HepG2 (cell line): ENCODE measurements at regions of chr15 and their contacts with region 1.

Region 1: DNA sequence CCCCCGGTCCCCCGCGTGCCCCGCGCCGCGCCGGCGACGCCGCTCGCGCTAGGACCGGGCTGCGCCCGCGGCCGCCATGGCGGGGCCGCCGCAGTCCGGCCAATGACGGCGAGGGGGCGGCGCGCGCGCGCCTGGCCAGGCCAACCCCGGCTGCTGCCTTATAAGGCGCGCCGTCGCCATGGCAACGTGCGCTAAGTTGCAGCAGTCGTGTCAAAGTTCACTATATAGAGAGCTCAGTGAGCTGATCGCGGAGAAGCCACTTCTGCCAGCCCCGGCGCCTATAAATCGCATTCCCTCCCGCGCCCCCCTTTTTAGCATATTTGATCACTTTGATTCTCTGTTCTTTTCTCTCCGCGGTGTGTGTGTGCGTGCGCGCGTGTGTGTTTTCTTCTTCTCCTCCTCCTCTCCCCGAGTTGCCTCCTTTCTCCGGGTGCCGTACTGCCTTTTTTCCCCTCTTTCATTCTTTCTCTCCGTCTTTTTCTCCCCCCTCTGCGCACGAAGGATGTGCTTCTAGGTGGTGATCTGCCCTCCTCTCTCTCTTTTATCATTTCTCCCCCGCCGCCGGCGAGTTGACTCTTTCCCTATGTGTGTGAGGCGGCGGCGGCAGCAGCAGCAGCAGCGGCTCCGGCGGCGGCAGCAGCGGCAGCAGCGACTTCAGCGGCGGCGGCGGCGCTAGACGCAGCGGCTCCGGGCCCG is at the start of gene NR2F2:
- DNase-seq: peak; percentile 95
- ATAC-seq: peak; percentile 60
- H3K4me3 ChIP-seq: peak within 1 kb of the TSS; percentile 70 to 94 (median 94)
- H3K27ac ChIP-seq: peak within 1 kb of the TSS; percentile 99
- H3K4me1 ChIP-seq: peaks cover 42% of the 10 kb centered on the region
- H3K27me3 ChIP-seq: no peaks in the 10 kb centered on the region; a peak in 1 of 5 replicates
- CTCF ChIP-seq: no peak
- EP300 ChIP-seq: peak in 1 of 2 experiments; percentile 17; a peak in 1 of 4 replicates
- POLR2A ChIP-seq: peak; percentile 79 to 83
- RAD21 ChIP-seq: 0 out of 2 replicates have a peak, but pooled peaks have one; percentile 20
- total RNA-seq, gene NR2F2: 3.5 and 5.0 TPM in 2 replicates

Region 2: GRCh38 chr15:94844538-94845389 is 1485.8 kb before region 1 on chr15:
- CTCF ChIA-PET with region 1: no interaction called
- POLR2A ChIA-PET with region 1: interaction called, 7 read pairs
- in situ Hi-C with region 1: no loop called
- intact Hi-C with region 1: loop called (anchors 5 kb)
- DNase-seq: peak; percentile 96
- ATAC-seq: peak; percentile 86
- H3K4me3 ChIP-seq: peak overlapping the region; percentile 43 to 63 (median 61)
- H3K27ac ChIP-seq: peak overlapping the region; percentile 97
- H3K4me1 ChIP-seq: peaks cover 52% of the 10 kb centered on the region
- H3K27me3 ChIP-seq: no peaks in the 10 kb centered on the region; a peak in 1 of 5 replicates
- CTCF ChIP-seq: peak; percentile 26; the same call in 1 of the 2 replicates
- EP300 ChIP-seq: peak; percentile 21 to 83; a peak in 3 of 4 replicates
- POLR2A ChIP-seq: peak in 1 of 2 experiments; percentile 32; a peak in 2 of 4 replicates
- RAD21 ChIP-seq: 0 out of 2 replicates have a peak, but pooled peaks have one; percentile 28

Region 3: DNA sequence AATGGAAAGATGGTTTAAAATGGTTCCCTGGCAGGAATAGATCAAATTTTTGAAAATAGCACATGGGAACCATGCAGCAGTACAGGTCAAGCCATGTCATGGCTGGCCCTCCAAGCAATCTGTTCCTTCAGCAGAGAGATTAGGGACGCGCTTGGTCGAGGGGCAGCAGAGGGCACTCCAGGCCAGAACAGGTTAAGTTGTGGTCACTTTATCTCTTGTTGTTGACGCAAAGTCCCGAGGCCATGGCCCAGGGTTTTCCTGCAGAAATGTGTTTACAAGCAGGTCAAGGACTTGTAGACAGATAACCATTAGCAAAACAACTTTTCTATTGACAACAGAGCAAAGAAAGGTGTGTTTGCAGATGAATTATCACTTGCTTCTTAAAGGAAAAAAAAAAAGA is 570.1 kb before region 1 on chr15:
- CTCF ChIA-PET with region 1: no interaction called
- POLR2A ChIA-PET with region 1: no interaction called
- in situ Hi-C with region 1: loop called (anchors 25 kb)
- intact Hi-C with region 1: loop called (anchors 5 kb)
- DNase-seq: peak; percentile 30
- ATAC-seq: peak; percentile 94
- H3K4me3 ChIP-seq: no peak overlapping the region
- H3K27ac ChIP-seq: no peak overlapping the region
- H3K4me1 ChIP-seq: no peaks in the 10 kb centered on the region
- H3K27me3 ChIP-seq: no peaks in the 10 kb centered on the region
- CTCF ChIP-seq: peak; percentile 76
- EP300 ChIP-seq: peak in 1 of 2 experiments; percentile 23; a peak in 1 of 4 replicates
- POLR2A ChIP-seq: no peak
- RAD21 ChIP-seq: peak; percentile 35; the same call in 1 of the 2 replicates

Region 4: DNA sequence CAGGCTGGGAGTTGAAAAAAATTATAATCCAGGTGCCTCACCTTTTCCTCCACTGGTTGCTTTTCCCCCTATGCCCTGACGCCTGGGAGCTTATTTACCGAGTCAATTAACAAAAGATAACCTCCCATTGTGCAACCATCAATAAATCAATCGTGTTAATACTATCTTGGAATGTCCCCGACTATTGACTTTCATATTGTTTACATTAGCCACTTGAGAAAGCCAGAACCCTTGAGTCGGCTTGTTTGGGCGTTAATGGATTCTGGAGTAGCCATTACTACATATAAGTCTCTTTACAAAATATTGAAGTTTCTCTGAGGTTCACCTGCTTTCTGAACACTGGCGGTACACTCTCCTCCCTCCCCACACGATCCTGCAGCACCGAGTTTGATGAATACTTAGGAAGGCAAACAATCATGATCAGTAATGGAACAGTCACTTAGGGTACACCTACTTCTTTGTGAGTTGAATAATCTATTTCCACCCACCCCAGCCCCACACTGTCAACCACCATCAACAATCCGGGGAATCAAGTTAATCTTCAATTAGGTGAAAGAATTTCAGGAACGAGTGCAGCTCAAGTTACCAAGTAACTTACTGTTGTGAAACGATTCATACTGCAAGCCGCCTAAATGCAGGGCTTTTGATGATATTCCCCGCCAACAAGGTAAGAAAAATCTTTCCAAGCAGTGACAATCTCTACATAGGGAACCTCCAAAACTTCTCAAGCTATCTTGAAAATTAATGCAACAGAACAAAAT is 159.4 kb before region 1 on chr15:
- CTCF ChIA-PET with region 1: no interaction called
- POLR2A ChIA-PET with region 1: interaction called, 3 read pairs
- in situ Hi-C with region 1: loop called (anchors 10 kb)
- intact Hi-C with region 1: loop called (anchors 2 kb)
- DNase-seq: peak; percentile 88
- ATAC-seq: peak; percentile 95
- H3K4me3 ChIP-seq: peak overlapping the region; percentile 27 to 54 (median 52); a peak in 5 of 6 replicates
- H3K27ac ChIP-seq: peak overlapping the region; percentile 86
- H3K4me1 ChIP-seq: peaks cover 43% of the 10 kb centered on the region
- H3K27me3 ChIP-seq: no peaks in the 10 kb centered on the region
- CTCF ChIP-seq: no peak
- EP300 ChIP-seq: peak in 1 of 2 experiments; percentile 77; a peak in 2 of 4 replicates
- POLR2A ChIP-seq: no peak
- RAD21 ChIP-seq: no peak

Region 5: GRCh38 chr15:96218623-96219455 is 111.8 kb before region 1 on chr15:
- CTCF ChIA-PET with region 1: no interaction called
- POLR2A ChIA-PET with region 1: no interaction called
- in situ Hi-C with region 1: no loop called
- intact Hi-C with region 1: no loop called
- DNase-seq: no peak
- ATAC-seq: no peak
- H3K4me3 ChIP-seq: no peak overlapping the region
- H3K27ac ChIP-seq: no peak overlapping the region
- H3K4me1 ChIP-seq: peaks cover 13% of the 10 kb centered on the region
- H3K27me3 ChIP-seq: no peaks in the 10 kb centered on the region
- CTCF ChIP-seq: no peak
- EP300 ChIP-seq: no peak
- POLR2A ChIP-seq: no peak
- RAD21 ChIP-seq: no peak

Region 6: GRCh38 chr15:96345560-96346399 is 15.2 kb after region 1 on chr15:
- CTCF ChIA-PET with region 1: interaction called, 8 read pairs
- POLR2A ChIA-PET with region 1: interaction called, 3 read pairs
- in situ Hi-C with region 1: no loop called
- intact Hi-C with region 1: loop called (anchors 1 kb)
- DNase-seq: peak; percentile 47
- ATAC-seq: peak; percentile 82
- H3K4me3 ChIP-seq: no peak overlapping the region
- H3K27ac ChIP-seq: no peak overlapping the region
- H3K4me1 ChIP-seq: peaks cover 14% of the 10 kb centered on the region; the same call in 1 of the 2 replicates
- H3K27me3 ChIP-seq: no peaks in the 10 kb centered on the region
- CTCF ChIP-seq: peak; percentile 48
- EP300 ChIP-seq: no peak
- POLR2A ChIP-seq: no peak
- RAD21 ChIP-seq: peak; percentile 55; the same call in 1 of the 2 replicates

Region 7: GRCh38 chr15:96585484-96586386 is 255.1 kb after region 1 on chr15:
- CTCF ChIA-PET with region 1: no interaction called
- POLR2A ChIA-PET with region 1: no interaction called
- in situ Hi-C with region 1: no loop called
- intact Hi-C with region 1: loop called (anchors 10 kb)
- DNase-seq: no peak
- ATAC-seq: no peak
- H3K4me3 ChIP-seq: no peak overlapping the region
- H3K27ac ChIP-seq: no peak overlapping the region
- H3K4me1 ChIP-seq: no peaks in the 10 kb centered on the region
- H3K27me3 ChIP-seq: no peaks in the 10 kb centered on the region; a peak in 1 of 5 replicates
- CTCF ChIP-seq: no peak
- EP300 ChIP-seq: no peak
- POLR2A ChIP-seq: no peak
- RAD21 ChIP-seq: no peak

Region 8: DNA sequence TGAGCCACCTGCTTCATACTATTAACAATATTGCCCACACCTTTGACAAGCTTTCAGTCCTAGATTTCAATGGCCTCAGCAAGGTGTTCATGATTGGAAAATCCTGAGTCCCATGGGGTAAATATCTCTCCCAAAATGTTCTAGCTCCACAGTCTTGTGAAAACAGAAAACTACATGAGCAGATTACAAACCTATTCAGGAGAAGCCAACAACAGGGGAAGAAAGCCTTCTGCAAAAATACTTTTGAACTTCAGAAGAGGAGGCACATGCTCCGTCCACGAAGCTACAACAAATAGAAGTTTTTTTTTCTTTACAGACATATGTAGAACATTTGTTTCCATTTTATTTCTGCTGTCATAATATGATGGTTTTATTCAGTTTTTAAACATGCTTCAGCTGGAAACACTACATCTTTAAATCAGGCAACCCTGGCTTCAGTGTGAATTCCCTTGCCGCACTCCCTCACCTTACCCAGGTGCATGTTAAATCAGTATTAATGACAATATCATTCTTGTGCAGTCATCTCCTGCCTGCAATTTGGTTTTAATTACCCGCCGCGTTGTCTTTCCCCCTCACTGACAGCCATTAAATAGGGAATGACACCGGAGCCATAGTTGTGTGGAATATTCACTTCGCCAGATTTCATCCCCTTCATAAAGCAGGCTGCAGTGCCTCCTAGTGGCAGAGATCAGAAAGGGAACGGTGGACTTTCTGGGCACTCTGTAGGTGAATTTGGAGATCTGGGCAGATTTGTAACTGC is 904.4 kb after region 1 on chr15:
- CTCF ChIA-PET with region 1: no interaction called
- POLR2A ChIA-PET with region 1: no interaction called
- in situ Hi-C with region 1: loop called (anchors 25 kb)
- intact Hi-C with region 1: loop called (anchors 1 kb)
- DNase-seq: peak; percentile 30
- ATAC-seq: peak; percentile 90
- H3K4me3 ChIP-seq: no peak overlapping the region
- H3K27ac ChIP-seq: no peak overlapping the region
- H3K4me1 ChIP-seq: no peaks in the 10 kb centered on the region
- H3K27me3 ChIP-seq: no peaks in the 10 kb centered on the region
- CTCF ChIP-seq: peak; percentile 80
- EP300 ChIP-seq: no peak
- POLR2A ChIP-seq: no peak
- RAD21 ChIP-seq: peak; percentile 49